Activated naive CD4-positive, alpha-beta T cell treated with anti-CD3 and anti-CD28 coated beads for 36 hours (primary cell): ENCODE measurements at regions of chr19 and their contacts with region 1.

Region 1: GRCh38 chr19:48363810-48364563 is at the starts of genes SYNGR4 and TMEM143:
- DNase-seq: peak; percentile 99
- H3K4me3 Mint-ChIP-seq: peak within 1 kb of the TSS; percentile 86
- H3K27ac Mint-ChIP-seq: peak within 1 kb of the TSS; percentile 93
- H3K4me1 Mint-ChIP-seq: peaks cover 12% of the 10 kb centered on the region
- H3K27me3 Mint-ChIP-seq: no peaks in the 10 kb centered on the region
- total RNA-seq, gene SYNGR4: 0.50 to 0.52 TPM
- total RNA-seq, gene TMEM143: 23.9 to 24.1 TPM

Region 2: GRCh38 chr19:48170038-48170812 is 193.8 kb before region 1 on chr19 and contains the starts of genes LIG1 and ZSWIM9:
- CTCF ChIA-PET with region 1: no interaction called
- intact Hi-C with region 1: loop called (anchors 1 kb)
- DNase-seq: peak; percentile 93
- H3K4me3 Mint-ChIP-seq: peak within 1 kb of the TSS; percentile 90
- H3K27ac Mint-ChIP-seq: peak within 1 kb of the TSS; percentile 97
- H3K4me1 Mint-ChIP-seq: peaks cover 30% of the 10 kb centered on the region
- H3K27me3 Mint-ChIP-seq: no peaks in the 10 kb centered on the region
- total RNA-seq, gene LIG1: 187 to 195 TPM
- total RNA-seq, gene ZSWIM9: 6.1 to 6.7 TPM

Region 3: GRCh38 chr19:48321622-48322591 is 42.1 kb before region 1 on chr19:
- CTCF ChIA-PET with region 1: interaction called, 6 read pairs
- intact Hi-C with region 1: loop called (anchors 1 kb)
- DNase-seq: peak; percentile 99
- H3K4me3 Mint-ChIP-seq: peak overlapping the region; percentile 92
- H3K27ac Mint-ChIP-seq: peak overlapping the region; percentile 99
- H3K4me1 Mint-ChIP-seq: peaks cover 57% of the 10 kb centered on the region
- H3K27me3 Mint-ChIP-seq: no peaks in the 10 kb centered on the region

Region 4: GRCh38 chr19:48342841-48343540 is 21.0 kb before region 1 on chr19:
- CTCF ChIA-PET with region 1: no interaction called
- intact Hi-C with region 1: no loop called
- DNase-seq: no peak
- H3K4me3 Mint-ChIP-seq: no peak overlapping the region
- H3K27ac Mint-ChIP-seq: no peak overlapping the region
- H3K4me1 Mint-ChIP-seq: no peaks in the 10 kb centered on the region
- H3K27me3 Mint-ChIP-seq: no peaks in the 10 kb centered on the region

Region 5: GRCh38 chr19:48391107-48391986 is 27.4 kb after region 1 on chr19 and contains the start of gene KDELR1:
- CTCF ChIA-PET with region 1: interaction called, 14 read pairs
- intact Hi-C with region 1: loop called (anchors 1 kb)
- DNase-seq: peak; percentile 73
- H3K4me3 Mint-ChIP-seq: peak within 1 kb of the TSS; percentile 94
- H3K27ac Mint-ChIP-seq: peak within 1 kb of the TSS; percentile 90
- H3K4me1 Mint-ChIP-seq: peaks cover 36% of the 10 kb centered on the region
- H3K27me3 Mint-ChIP-seq: peaks cover 27% of the 10 kb centered on the region
- total RNA-seq, gene KDELR1: 81.5 to 83.8 TPM

Region 6: GRCh38 chr19:48445606-48446481 is 81.9 kb after region 1 on chr19 and contains the start of gene GRWD1:
- CTCF ChIA-PET with region 1: no interaction called
- intact Hi-C with region 1: loop called (anchors 1 kb)
- DNase-seq: peak; percentile 97
- H3K4me3 Mint-ChIP-seq: peak within 1 kb of the TSS; percentile 90
- H3K27ac Mint-ChIP-seq: peak within 1 kb of the TSS; percentile 84
- H3K4me1 Mint-ChIP-seq: peaks cover 35% of the 10 kb centered on the region
- H3K27me3 Mint-ChIP-seq: peaks cover 18% of the 10 kb centered on the region
- total RNA-seq, gene GRWD1: 32.4 to 36.0 TPM

Region 7: DNA sequence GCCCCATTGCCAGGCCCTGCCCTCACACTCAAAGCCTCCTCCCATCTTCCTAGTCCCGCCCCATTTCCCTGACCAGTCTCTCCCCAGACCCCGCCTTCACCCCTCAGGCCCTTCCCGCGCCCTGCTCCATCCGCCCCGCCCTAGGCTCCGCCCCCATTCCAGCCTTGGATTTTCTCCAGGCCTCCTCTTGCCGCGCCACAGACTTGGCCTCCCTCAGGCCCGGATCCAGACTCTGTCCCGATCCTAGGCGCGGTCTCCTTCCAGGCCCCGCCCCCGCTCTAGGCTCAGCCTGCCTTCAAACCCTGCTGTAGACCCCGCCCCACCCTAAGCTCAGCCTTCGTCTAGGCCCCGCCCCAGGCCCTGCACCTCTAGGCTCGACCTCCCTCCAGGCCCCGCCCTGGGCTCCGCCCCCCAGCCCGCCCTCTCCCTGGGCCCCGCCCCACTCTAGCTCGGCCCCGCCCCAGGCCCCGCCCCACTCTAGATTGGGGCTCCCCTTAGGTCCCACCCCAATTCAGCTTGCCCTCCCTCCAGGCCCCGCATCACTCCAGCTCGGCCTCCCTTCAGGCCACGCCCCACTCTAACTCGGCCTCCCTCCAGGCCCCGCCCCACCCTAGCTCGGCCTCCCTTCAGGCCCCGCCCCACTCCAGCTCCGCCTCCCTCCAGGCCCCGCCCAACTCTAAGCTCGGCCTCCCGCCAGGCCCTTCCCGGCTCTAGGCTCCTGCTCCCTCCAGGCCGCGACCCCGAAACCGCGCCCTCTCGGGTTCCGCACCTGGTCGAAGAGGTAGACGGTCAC is 129.1 kb after region 1 on chr19:
- CTCF ChIA-PET with region 1: no interaction called
- intact Hi-C with region 1: loop called (anchors 1 kb)
- DNase-seq: peak; percentile 86
- H3K4me3 Mint-ChIP-seq: peak overlapping the region; percentile 62
- H3K27ac Mint-ChIP-seq: no peak overlapping the region
- H3K4me1 Mint-ChIP-seq: peaks cover 31% of the 10 kb centered on the region
- H3K27me3 Mint-ChIP-seq: peaks cover 38% of the 10 kb centered on the region

Region 8: DNA sequence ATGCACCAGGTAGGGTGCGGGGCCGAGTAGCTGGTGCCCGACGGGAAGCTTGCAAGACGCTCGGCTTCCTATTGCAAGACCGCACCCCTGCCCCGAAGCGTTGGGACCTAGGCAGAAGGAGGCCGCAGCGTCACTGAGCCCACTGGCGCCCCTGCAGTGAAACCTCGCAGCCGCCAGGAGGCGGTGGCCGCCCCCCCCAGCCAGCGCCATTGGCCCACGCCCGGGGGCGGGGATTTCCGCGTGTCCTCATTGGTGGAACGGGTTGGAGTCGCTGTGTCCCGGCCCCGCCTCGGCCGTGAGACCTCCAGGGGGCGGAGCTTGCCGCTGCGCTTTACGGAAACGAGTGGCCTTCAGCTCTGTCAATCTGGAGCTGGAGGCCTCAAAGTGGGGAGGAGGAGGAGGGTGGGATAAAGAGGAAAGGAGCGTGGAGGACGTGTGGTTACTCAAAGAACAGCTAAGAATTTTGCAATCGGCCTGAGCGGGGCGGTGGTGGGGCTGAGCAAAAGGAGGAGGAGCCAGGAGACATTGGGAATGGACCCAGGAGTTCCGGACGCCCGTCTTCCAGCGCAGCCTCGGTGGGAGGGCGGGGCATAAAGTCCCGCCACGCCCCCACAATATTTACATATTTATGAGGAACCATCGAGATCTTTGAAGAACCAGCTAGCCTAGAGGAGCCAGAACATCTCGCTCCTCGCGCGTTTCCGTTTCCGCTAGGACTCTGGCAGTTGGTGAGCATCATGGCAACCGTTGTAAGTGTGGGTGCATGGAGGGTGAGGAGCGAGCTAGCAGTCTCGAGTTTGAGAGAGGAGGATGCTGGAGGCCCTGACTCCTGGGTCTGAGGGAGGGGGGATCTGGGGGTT is 629.4 kb after region 1 on chr19 and contains the starts of genes GYS1 and RUVBL2:
- CTCF ChIA-PET with region 1: no interaction called
- intact Hi-C with region 1: loop called (anchors 10 kb)
- DNase-seq: peak; percentile 99
- H3K4me3 Mint-ChIP-seq: peak within 1 kb of the TSS; percentile 83
- H3K27ac Mint-ChIP-seq: peak within 1 kb of the TSS; percentile 94
- H3K4me1 Mint-ChIP-seq: peaks cover 44% of the 10 kb centered on the region
- H3K27me3 Mint-ChIP-seq: no peaks in the 10 kb centered on the region
- total RNA-seq, gene GYS1: 29.6 to 31.2 TPM
- total RNA-seq, gene RUVBL2: 119 to 126 TPM